A673 (cell line): ENCODE measurements at regions of chr10 and their contacts with region 1.

Region 1: DNA sequence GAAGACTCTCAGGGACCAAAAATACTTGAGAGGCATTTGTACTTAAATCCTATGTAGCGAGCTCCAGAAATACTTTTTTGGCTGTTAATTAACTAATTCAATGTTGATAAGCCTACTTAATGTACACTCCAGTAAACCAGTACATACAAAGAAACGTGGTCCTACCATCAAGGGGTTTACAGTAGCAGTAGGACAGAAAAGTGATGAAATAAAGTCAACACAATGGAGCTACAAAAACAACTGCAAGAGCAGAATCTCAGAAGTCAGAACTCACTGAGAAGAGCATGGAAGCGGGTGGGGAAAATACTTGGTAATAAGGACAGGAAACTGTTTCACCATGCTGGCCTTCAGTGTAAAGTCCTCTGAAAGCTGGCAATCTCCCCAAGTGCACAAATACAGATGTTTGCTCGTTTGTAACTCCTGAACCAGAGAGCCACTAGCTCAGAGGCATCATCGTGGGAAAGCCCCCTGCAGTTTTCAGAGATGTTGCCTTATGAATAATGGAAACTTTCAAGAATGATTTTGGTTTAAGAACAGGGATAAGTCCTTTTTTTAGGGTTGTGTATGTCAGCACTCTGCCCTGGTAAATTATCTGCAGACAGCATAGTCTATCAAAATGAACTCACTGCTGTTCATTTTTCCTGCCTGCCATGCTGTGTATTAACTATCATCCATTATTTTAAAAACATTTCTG is 233.2 kb downstream of the SORCS1 start:
- DNase-seq: peak; percentile 88
- H3K4me3 ChIP-seq: no peak overlapping the region
- H3K27ac ChIP-seq: peak overlapping the region; percentile 61
- H3K4me1 ChIP-seq: peaks cover 37% of the 10 kb centered on the region
- H3K27me3 ChIP-seq: no peaks in the 10 kb centered on the region
- CTCF ChIP-seq: no peak

Region 2: GRCh38 chr10:106775127-106775526 is 156.2 kb before region 1 on chr10:
- CTCF ChIA-PET with region 1: interaction called, 11 read pairs
- POLR2A ChIA-PET with region 1: no interaction called
- intact Hi-C with region 1: no loop called
- DNase-seq: no peak
- H3K4me3 ChIP-seq: no peak overlapping the region
- H3K27ac ChIP-seq: no peak overlapping the region
- H3K4me1 ChIP-seq: no peaks in the 10 kb centered on the region
- H3K27me3 ChIP-seq: peaks cover 11% of the 10 kb centered on the region
- CTCF ChIP-seq: no peak